ENCODE measurements at regions of chr6 and their contacts with region 1.

Region 1: DNA sequence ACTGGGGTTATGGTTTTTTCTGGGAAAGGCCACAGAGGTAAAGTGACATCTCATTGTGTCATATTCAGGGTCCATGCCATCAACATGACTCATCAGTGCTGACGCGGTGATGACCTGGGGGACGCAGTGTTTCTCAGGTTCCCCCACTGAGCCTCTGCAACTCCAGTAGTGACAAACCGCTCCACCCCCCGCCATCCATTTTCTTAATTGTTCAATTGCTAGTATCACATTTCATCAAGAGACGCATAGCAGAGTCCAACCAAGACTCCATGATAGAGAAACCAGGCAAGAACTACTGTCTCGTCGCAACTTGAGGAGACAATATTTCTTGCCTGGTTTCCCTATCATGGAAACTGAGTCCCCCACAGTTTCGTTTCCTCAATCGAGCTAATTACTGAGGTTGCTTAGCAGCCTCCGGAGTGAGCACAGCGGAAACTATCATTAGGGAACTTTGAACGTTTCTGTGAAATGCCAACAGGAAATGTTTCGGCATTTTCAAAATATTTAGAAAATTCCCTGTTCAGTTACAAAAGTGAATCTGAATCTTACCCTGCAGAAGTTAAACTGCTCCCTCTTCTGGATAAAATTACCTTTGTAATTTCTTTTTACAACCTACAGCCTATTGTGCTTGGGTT is 12.2 kb upstream of the SERPINB1 start:
- DNase-seq: no peak
- H3K4me3 ChIP-seq: peak overlapping the region; percentile 7 to 62 (median 38)
- H3K27ac ChIP-seq: peak overlapping the region; percentile 38 to 82 (median 76)
- H3K4me1 ChIP-seq: peaks cover 7 to 61% (median 21%) of the 10 kb centered on the region in 3 donors
- H3K27me3 ChIP-seq: no peaks in the 10 kb centered on the region
- CTCF ChIP-seq: peak in 5 of 6 experiments; percentile 17 to 54 (median 33)
- POLR2A ChIP-seq: no peak

Region 2: DNA sequence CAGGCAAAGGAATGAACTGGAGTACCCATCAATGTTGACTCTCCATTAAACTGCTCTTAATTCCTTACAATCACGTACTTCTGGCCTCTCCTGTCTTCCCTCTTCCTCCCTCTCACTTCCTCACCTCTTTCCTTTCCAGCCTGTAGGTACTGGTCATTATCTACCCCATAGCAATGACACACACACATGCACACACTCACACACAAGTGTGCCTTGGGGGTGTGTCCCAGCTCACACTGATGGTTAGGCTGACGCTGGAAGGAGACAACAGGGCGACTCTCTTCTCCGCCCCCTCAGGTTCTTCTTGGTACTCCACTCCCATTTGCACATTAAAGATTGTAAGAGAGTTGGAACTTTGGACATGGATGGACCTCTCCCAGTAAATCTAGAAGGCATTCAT is 63.2 kb after region 1 on chr6:
- intact Hi-C with region 1: loop called (anchors 5 kb)
- DNase-seq: no peak
- H3K4me3 ChIP-seq: no peak overlapping the region
- H3K27ac ChIP-seq: no peak overlapping the region
- H3K4me1 ChIP-seq: peaks cover 0 to 12% (median 0%) of the 10 kb centered on the region in 3 donors
- H3K27me3 ChIP-seq: no peaks in the 10 kb centered on the region
- CTCF ChIP-seq: peak in 1 of 6 experiments; percentile 8
- POLR2A ChIP-seq: no peak

Region 3: DNA sequence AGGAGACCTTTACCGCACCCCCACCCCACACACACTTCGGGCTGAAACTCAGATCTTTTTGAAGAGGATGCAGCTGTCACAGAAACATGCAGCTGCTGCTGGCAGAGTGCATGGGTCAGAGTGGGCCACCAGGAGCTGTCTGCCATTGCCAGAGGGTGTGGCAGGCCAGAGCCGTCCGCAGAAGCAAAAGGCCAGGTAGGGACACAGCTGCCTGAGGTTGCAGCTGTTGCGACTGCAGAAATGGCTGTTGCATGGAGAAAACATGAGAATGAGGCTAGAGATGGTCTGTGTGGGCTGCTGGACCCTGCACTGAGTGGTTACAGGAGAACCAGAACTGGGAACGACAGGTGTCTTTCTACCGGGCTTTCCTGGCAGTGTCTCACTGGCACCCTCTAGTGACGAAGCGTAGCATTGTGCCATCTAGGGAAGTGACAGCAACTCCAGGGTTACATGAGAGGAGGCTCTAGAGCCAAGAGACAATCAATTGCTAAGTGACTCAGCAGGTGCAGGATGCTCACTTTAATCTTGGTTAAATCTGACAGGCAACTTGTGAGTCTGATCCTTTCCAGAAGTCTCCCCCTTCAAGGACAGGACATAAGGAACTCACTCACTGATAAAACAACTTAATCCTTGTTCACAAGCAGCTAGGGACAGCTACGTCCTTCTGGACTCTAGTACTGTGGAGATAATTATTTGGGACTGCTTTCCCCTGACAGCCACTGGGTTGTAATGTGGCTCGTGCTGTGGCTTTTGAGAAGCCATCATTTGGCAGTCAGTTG is 78.3 kb after region 1 on chr6:
- intact Hi-C with region 1: loop called (anchors 5 kb)
- DNase-seq: no peak
- H3K4me3 ChIP-seq: peak overlapping the region in 2 of 4 donors; percentile 1 to 44
- H3K27ac ChIP-seq: no peak overlapping the region
- H3K4me1 ChIP-seq: peaks cover 3 to 8% (median 8%) of the 10 kb centered on the region in 3 donors
- H3K27me3 ChIP-seq: no peaks in the 10 kb centered on the region
- CTCF ChIP-seq: peak; percentile 86 to 94 (median 92)
- POLR2A ChIP-seq: peak in 1 of 4 donors; percentile 4

Region 4: DNA sequence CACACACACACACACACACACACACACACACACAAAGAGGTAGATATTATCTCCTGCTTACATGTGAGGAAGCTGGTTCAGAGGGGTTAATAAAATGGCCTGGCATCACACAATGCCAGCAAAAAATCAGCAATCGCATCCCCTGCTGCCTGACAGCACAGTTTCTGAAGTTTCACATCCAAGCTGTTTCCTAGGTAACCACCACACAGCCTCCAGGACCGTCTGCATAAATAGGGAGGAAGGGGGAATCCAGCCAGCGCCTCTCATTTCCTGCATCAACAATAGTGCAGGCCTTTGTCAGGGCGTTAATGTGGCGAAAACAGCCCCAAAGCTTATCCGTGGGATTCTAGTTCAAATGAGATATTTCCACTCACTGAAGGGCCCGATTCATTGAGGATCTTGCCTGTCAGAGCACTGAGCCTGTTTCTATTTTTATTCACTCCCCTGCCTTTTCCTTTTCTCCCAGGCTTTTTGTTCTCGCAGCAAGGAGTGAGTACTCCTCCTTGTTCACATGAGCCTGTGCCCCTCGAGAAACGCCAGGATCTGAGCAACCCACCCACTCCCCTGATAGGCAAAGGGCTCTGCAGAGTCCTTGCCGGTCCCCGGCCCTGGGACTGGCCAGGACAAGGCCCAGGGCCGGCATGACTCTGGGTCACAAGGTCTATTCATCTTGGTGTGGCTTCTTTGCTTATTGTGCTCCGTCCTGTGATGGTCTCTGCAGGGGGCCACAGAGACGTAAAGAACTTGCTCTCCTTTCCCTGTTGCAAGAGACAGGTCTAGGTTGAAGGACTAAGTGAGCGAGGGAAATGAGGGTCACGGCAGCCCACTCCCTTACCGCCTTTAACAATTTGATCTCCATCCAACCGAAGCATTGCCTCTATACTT is 340.9 kb after region 1 on chr6:
- intact Hi-C with region 1: no loop called
- DNase-seq: no peak
- H3K4me3 ChIP-seq: no peak overlapping the region
- H3K27ac ChIP-seq: peak overlapping the region in 1 of 4 donors; percentile 29
- H3K4me1 ChIP-seq: peaks cover 0 to 6% (median 0%) of the 10 kb centered on the region in 3 donors
- H3K27me3 ChIP-seq: no peaks in the 10 kb centered on the region
- CTCF ChIP-seq: no peak
- POLR2A ChIP-seq: no peak

Measured in esophagus squamous epithelium (tissue), 5 donors.